ENCODE measurements at regions of chr1 and their contacts with region 1.

Region 1: DNA sequence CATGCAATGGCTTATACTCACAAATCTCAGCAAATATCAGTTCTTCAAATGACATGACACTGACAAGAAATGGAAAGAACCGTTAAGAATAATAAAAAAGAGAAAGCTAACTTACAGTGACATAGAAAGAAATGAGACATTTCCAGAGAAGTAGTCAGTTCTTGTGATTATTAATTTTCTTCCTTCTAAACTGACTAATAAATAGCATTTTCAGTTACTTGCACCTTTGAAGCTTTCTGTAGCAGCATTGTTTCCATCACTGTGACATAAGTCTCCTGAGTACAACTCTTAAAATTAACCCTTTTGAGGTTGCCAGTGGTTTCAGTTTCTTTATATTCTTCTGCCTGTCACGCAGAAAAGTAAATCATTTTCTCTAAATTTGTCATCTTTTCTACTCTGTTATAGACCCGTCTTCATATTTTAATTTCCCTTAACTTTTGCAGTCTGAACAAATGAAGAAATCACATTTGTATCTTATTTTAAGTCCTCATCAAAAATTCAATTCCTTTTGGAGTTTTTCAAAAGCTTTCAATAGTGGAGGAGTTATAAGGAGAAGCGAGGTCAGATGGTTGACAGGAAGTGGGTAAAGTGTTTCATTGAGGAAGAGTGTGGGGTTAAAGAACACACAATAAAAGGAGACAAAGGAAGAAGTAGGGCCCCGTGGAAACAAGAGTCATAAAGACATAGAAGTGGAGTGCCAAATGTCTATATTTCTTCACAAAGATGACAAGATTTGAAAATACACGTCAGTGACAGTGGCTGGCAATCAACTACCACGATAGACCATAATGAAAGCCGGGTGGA is 57.9 kb upstream of the S1PR1 start:
- DNase-seq: peak; percentile 66
- H3K4me3 Mint-ChIP-seq: peak overlapping the region; percentile 63
- H3K27ac Mint-ChIP-seq: peak overlapping the region; percentile 100
- H3K4me1 Mint-ChIP-seq: peaks cover 82% of the 10 kb centered on the region
- H3K27me3 Mint-ChIP-seq: no peaks in the 10 kb centered on the region

Region 2: DNA sequence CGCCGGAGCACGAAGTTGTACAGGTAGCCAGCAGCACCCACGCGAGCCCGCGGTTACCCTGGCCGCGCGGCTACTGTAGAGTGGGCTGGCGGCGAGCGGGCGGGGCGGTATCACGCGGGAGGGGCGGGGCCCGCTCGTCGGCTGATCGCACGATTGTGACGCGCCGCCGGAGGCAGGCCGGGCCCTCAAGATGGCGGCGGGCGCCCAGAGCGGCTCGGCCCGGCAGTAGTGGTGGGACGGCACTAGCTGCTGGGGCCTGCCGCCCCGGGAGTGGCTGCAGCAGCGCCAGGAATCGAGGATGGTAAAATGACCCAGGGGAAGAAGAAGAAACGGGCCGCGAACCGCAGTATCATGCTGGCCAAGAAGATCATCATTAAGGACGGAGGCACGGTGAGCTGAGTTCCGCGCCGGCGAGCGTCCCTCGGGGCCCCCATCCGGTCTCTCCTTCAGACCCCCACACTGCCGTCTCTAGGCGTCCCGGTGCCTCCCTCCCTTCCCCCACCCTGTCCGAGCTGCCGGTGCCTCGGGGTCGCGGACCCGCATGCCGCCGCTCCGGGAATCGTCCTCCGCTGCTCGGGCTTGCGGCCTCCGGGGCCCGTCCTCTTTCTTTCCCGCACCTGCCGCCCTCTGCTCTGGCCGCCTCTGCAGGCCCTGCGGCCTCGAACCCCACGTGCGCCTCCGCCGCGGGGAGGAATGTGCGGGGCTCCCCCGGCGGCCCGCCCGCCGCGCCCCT is 1140.8 kb before region 1 on chr1:
- CTCF ChIA-PET with region 1: no interaction called
- intact Hi-C with region 1: loop called (anchors 2 kb)
- DNase-seq: peak; percentile 89
- H3K4me3 Mint-ChIP-seq: peak overlapping the region; percentile 95
- H3K27ac Mint-ChIP-seq: peak overlapping the region; percentile 99
- H3K4me1 Mint-ChIP-seq: peaks cover 54% of the 10 kb centered on the region
- H3K27me3 Mint-ChIP-seq: no peaks in the 10 kb centered on the region

Region 3: GRCh38 chr1:100657876-100658715 is 520.8 kb before region 1 on chr1:
- CTCF ChIA-PET with region 1: no interaction called
- intact Hi-C with region 1: no loop called
- DNase-seq: no peak
- H3K4me3 Mint-ChIP-seq: no peak overlapping the region
- H3K27ac Mint-ChIP-seq: no peak overlapping the region
- H3K4me1 Mint-ChIP-seq: no peaks in the 10 kb centered on the region
- H3K27me3 Mint-ChIP-seq: no peaks in the 10 kb centered on the region

Region 4: GRCh38 chr1:100928128-100928527 is 250.8 kb before region 1 on chr1:
- CTCF ChIA-PET with region 1: no interaction called
- intact Hi-C with region 1: loop called (anchors 1 kb)
- DNase-seq: peak; percentile 49
- H3K4me3 Mint-ChIP-seq: no peak overlapping the region
- H3K27ac Mint-ChIP-seq: no peak overlapping the region
- H3K4me1 Mint-ChIP-seq: peaks cover 30% of the 10 kb centered on the region
- H3K27me3 Mint-ChIP-seq: no peaks in the 10 kb centered on the region

Region 5: GRCh38 chr1:100979631-100980030 is 199.3 kb before region 1 on chr1:
- CTCF ChIA-PET with region 1: no interaction called
- intact Hi-C with region 1: no loop called
- DNase-seq: no peak
- H3K4me3 Mint-ChIP-seq: no peak overlapping the region
- H3K27ac Mint-ChIP-seq: no peak overlapping the region
- H3K4me1 Mint-ChIP-seq: peaks cover 6% of the 10 kb centered on the region
- H3K27me3 Mint-ChIP-seq: no peaks in the 10 kb centered on the region

Region 6: GRCh38 chr1:101013776-101014175 is 165.1 kb before region 1 on chr1:
- CTCF ChIA-PET with region 1: no interaction called
- intact Hi-C with region 1: no loop called
- DNase-seq: no peak
- H3K4me3 Mint-ChIP-seq: no peak overlapping the region
- H3K27ac Mint-ChIP-seq: no peak overlapping the region
- H3K4me1 Mint-ChIP-seq: peaks cover 10% of the 10 kb centered on the region
- H3K27me3 Mint-ChIP-seq: no peaks in the 10 kb centered on the region

Region 7: GRCh38 chr1:101025657-101026504 is 153.0 kb before region 1 on chr1 and contains the start of gene DPH5:
- CTCF ChIA-PET with region 1: no interaction called
- intact Hi-C with region 1: loop called (anchors 1 kb)
- DNase-seq: peak; percentile 92
- H3K4me3 Mint-ChIP-seq: peak within 1 kb of the TSS; percentile 99
- H3K27ac Mint-ChIP-seq: peak within 1 kb of the TSS; percentile 98
- H3K4me1 Mint-ChIP-seq: peaks cover 58% of the 10 kb centered on the region
- H3K27me3 Mint-ChIP-seq: no peaks in the 10 kb centered on the region
- total RNA-seq, gene DPH5: 61.7 to 66.3 TPM

Region 8: DNA sequence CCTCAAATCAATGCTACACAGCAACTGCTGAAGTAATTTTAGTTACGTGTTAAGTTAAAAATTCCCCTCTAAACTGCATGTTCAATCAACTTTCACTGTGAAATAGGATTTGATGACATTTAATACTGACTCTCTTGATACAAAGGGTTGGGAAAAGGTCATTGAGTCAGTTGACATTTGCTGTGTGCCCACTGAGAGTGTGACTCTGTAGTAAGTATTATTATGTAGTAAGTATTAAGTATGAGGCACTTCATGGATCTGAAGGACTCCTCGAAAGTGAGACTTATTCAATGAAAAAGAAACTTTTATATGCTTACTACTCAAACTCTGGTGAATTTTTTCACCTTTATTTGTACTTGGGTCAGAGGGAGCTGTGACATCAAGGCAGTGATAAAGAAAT is 25.2 kb before region 1 on chr1:
- CTCF ChIA-PET with region 1: no interaction called
- intact Hi-C with region 1: loop called (anchors 1 kb)
- DNase-seq: peak; percentile 37
- H3K4me3 Mint-ChIP-seq: no peak overlapping the region
- H3K27ac Mint-ChIP-seq: peak overlapping the region; percentile 25
- H3K4me1 Mint-ChIP-seq: peaks cover 44% of the 10 kb centered on the region
- H3K27me3 Mint-ChIP-seq: no peaks in the 10 kb centered on the region

Region 9: GRCh38 chr1:101216623-101217022 is 37.7 kb after region 1 on chr1:
- CTCF ChIA-PET with region 1: no interaction called
- intact Hi-C with region 1: loop called (anchors 1 kb)
- DNase-seq: no peak
- H3K4me3 Mint-ChIP-seq: no peak overlapping the region
- H3K27ac Mint-ChIP-seq: no peak overlapping the region
- H3K4me1 Mint-ChIP-seq: peaks cover 25% of the 10 kb centered on the region
- H3K27me3 Mint-ChIP-seq: no peaks in the 10 kb centered on the region

Region 10: DNA sequence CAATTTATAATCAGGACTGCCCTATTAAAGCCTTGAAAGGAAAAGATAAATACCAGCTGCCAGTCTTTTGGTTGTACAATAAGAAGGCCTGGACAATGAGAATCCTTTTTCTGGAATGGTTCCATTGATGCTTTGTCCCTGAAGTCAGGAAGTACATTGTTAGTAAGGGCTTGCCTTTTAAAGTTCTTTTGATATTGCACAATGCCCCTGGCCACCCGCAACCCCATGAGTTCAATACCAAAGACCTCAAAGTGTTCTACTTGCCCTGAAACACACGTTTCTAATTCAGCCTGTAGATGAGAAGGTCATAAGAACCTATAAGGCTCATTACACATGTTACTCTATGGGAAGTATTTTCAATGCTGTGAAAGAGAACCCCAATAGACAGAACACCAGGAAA is 705.7 kb after region 1 on chr1:
- CTCF ChIA-PET with region 1: no interaction called
- intact Hi-C with region 1: no loop called
- DNase-seq: no peak
- H3K4me3 Mint-ChIP-seq: no peak overlapping the region
- H3K27ac Mint-ChIP-seq: no peak overlapping the region
- H3K4me1 Mint-ChIP-seq: no peaks in the 10 kb centered on the region
- H3K27me3 Mint-ChIP-seq: no peaks in the 10 kb centered on the region